GM12878 (cell line): ENCODE measurements at regions of chr11 and their contacts with region 1.

Region 1: GRCh38 chr11:68206187-68206601 is 6.9 kb downstream of the KMT5B start:
- DNase-seq: no peak
- ATAC-seq: peak; percentile 69
- H3K4me3 ChIP-seq: no peak overlapping the region
- H3K27ac ChIP-seq: no peak overlapping the region
- H3K4me1 ChIP-seq: peaks cover 20% of the 10 kb centered on the region
- H3K27me3 ChIP-seq: no peaks in the 10 kb centered on the region
- CTCF ChIP-seq: peak; percentile 77 to 82 (median 78)
- EP300 ChIP-seq: no peak
- POLR2A ChIP-seq: no peak
- RAD21 ChIP-seq: peak; percentile 78

Region 2: DNA sequence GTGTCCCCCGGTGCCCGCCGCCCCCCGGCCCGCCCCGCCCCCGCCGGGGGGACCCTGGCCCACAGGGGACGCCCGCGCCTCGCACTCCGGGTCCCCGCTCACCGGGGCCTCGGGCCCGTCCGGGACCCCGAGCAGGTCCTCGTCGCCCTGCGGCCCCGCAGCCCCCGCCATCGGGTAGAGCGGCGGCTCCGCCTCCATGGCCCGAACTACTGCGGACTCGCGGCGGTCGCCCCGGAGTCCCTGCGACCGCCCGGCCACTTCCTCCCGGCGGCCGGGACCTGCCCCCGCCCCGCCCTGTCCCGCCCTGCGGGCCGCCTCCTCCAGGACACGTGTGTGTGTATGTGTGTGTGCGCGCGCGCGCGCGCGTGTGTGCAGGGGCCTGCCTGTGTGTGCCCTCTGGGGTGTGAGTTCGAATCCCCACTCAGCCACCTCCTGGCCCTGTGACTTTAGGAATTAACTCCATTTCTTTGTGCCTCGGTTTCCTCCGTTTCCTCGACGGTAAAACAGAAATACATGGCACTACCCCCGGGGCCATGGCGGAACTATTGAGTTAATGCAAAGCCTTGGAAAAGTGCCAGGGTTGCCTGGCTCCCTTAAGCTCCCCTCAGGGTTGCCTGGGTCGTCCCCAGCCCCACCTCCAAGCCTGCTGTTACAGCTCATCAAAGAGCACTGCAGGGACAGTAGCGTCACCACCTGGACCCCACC is 202.2 kb before region 1 on chr11 and contains the start of gene UNC93B1:
- CTCF ChIA-PET with region 1: interaction called, 57 read pairs
- POLR2A ChIA-PET with region 1: no interaction called
- RAD21 ChIA-PET with region 1: interaction called, 4 read pairs
- SMC1A ChIA-PET with region 1: interaction called, 5 read pairs
- in situ Hi-C with region 1: loop called (anchors 5 kb)
- intact Hi-C with region 1: loop called (anchors 5 kb)
- DNase-seq: peak; percentile 57
- ATAC-seq: peak; percentile 88
- H3K4me3 ChIP-seq: peak within 1 kb of the TSS; percentile 92
- H3K27ac ChIP-seq: peak within 1 kb of the TSS; percentile 78
- H3K4me1 ChIP-seq: peaks cover 36% of the 10 kb centered on the region
- H3K27me3 ChIP-seq: no peaks in the 10 kb centered on the region
- CTCF ChIP-seq: no peak
- EP300 ChIP-seq: no peak
- POLR2A ChIP-seq: peak; percentile 87
- RAD21 ChIP-seq: no peak
- polyA plus RNA-seq, gene UNC93B1: 1.3 to 3.4 TPM

Region 3: DNA sequence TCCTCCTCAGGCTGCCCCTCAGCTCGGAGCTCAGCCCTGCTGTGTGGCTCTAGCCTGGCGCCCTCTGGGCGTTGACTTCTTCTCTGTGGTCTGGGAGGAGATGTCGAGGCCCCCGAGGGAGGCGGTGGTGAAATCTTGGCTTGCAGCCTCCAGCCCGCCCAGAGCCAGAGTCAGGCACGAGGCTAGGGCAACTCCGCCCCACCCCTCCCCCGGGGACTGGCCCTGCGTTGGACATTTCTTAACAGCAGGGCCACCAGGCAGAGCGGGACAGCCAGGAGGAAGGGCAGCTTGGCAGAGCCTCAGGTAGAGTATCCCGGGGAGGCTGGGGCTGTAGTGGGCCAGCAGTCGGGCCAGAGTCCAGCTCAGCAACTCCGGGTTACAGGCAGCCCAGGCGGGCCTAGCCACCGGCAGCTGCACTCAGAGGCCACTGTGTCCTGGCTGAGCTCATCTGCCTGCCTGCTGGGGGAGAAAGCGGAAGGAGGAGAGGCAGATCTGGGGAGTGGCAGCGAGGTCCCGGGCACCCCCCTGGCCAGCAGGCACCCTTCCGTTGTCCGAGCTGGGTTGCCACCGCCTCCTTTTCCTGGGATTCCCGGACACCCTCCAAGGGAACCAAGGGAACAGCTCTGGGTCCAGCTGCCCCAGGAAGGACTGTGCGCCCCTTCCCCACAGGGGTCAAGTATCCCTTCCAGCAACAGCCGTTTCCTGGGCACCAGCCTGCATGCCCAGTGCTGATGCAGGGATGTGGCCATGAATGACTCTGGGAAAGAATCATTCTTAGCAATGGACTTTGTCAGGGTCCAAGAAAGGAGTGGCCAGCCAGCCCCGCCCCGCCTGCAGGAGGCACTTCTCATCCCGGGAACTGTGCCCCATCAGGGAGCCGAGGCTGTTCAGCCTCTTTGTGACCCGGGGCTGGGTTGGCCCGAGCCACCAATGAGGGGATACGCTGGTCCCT is 195.8 kb before region 1 on chr11 and contains the start of gene ALDH3B1:
- CTCF ChIA-PET with region 1: interaction called, 57 read pairs
- POLR2A ChIA-PET with region 1: interaction called, 3 read pairs
- RAD21 ChIA-PET with region 1: interaction called, 4 read pairs
- SMC1A ChIA-PET with region 1: interaction called, 5 read pairs
- in situ Hi-C with region 1: loop called (anchors 5 kb)
- intact Hi-C with region 1: no loop called
- DNase-seq: no peak
- ATAC-seq: peak; percentile 74
- H3K4me3 ChIP-seq: no peak within 1 kb of the TSS
- H3K27ac ChIP-seq: no peak within 1 kb of the TSS
- H3K4me1 ChIP-seq: peaks cover 23% of the 10 kb centered on the region
- H3K27me3 ChIP-seq: no peaks in the 10 kb centered on the region
- CTCF ChIP-seq: no peak
- EP300 ChIP-seq: no peak
- POLR2A ChIP-seq: no peak
- RAD21 ChIP-seq: no peak
- polyA plus RNA-seq, gene ALDH3B1: 0.03 to 0.13 TPM

Region 4: GRCh38 chr11:68191661-68192579 is 14.3 kb before region 1 on chr11:
- CTCF ChIA-PET with region 1: interaction called, 10 read pairs
- POLR2A ChIA-PET with region 1: interaction called, 4 read pairs
- RAD21 ChIA-PET with region 1: interaction called, 3 read pairs
- SMC1A ChIA-PET with region 1: interaction called, 11 read pairs
- in situ Hi-C with region 1: no loop called
- intact Hi-C with region 1: no loop called
- DNase-seq: no peak
- ATAC-seq: peak; percentile 19; the same call in 2 of the 3 replicates
- H3K4me3 ChIP-seq: no peak overlapping the region
- H3K27ac ChIP-seq: no peak overlapping the region
- H3K4me1 ChIP-seq: peaks cover 8% of the 10 kb centered on the region; the same call in 1 of the 2 replicates
- H3K27me3 ChIP-seq: no peaks in the 10 kb centered on the region
- CTCF ChIP-seq: no peak
- EP300 ChIP-seq: no peak
- POLR2A ChIP-seq: no peak
- RAD21 ChIP-seq: no peak

Region 5: DNA sequence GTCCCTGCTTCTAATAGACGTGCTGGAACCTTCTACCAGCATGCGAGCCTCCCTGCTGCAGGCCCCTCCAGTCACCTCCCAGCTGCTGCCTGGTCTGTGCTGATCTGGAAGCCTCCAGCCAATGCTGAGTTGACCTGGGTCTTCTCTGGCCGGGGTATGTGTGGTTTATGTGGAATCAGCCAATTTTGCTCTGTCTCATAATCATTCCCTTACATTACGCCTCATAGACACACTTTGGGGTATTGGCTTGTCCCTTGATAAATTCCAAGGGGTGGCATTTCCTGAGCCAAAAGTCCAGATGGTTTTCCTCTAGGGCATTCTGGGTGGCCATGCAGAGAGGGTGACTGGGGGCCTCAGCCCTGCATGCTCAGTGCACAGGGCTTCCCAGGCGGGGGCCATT is 15.2 kb after region 1 on chr11:
- CTCF ChIA-PET with region 1: interaction called, 35 read pairs
- POLR2A ChIA-PET with region 1: no interaction called
- RAD21 ChIA-PET with region 1: no interaction called
- SMC1A ChIA-PET with region 1: no interaction called
- in situ Hi-C with region 1: no loop called
- intact Hi-C with region 1: no loop called
- DNase-seq: no peak
- ATAC-seq: no peak
- H3K4me3 ChIP-seq: no peak overlapping the region
- H3K27ac ChIP-seq: no peak overlapping the region
- H3K4me1 ChIP-seq: peaks cover 3% of the 10 kb centered on the region; the same call in 1 of the 2 replicates
- H3K27me3 ChIP-seq: no peaks in the 10 kb centered on the region
- CTCF ChIP-seq: no peak
- EP300 ChIP-seq: no peak
- POLR2A ChIP-seq: no peak
- RAD21 ChIP-seq: no peak